ENCODE measurements at regions of chr19 and their contacts with region 1.

Region 1: DNA sequence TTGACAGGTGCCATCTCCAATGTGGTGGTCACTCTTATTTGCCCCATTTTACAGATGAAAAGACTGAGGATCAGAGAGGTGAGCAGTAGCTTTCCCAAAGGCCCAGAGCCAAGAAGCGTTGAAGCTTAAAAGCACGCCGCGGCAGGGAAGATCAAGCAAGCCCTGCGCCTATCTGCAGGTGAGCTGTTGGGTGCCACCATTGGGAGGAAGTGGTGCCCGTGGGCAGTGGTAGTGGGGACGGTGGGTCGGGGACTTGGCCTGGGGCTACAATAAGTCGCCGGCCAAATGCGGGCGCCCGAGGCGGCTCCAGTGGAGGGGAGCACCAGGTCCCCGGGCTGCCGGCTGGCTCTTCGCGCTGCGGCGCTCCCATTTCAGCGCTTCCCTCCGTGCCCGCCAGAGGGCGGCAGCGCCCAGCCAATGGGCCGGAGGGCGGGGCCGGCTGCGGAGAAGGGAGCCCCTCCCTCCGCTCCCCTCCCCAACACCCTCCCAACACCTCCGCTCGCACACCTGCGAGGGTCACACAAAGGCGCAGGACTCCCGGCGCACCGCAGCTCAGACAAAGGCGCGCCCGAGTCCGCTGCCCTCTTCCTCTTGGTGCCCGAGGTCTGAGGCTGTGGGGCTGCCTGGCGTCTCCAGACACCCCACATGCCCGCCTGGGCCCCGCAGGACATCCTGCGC is 744 bp upstream of the POU2F2 start:
- DNase-seq: peak; percentile 27 to 92
- H3K4me3 ChIP-seq: no peak overlapping the region
- CTCF ChIP-seq: no peak
- POLR2A ChIP-seq: no peak

Region 2: GRCh38 chr19:42172261-42172660 is 39.3 kb after region 1 on chr19:
- intact Hi-C with region 1: no loop called
- DNase-seq: no peak
- H3K4me3 ChIP-seq: no peak overlapping the region
- CTCF ChIP-seq: no peak
- POLR2A ChIP-seq: no peak

Region 3: DNA sequence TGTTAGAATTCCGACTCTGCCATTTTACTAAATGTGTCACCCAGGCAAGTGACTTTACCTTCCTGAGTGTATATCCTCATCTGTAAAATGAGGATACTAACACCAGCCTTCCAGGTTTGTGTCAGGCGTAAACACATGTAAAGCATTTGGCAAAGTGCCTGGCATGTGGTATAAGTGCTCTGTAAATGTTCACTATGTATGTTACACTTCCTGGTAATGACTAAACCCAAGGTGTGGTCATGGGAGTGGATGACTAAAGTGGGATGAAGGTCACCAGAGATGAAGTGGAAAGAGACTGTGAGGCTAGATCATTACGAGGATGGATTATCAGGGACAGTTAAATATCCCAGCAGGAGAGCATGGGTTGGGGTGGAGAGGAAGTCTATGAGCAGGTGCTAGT is 58.9 kb after region 1 on chr19:
- intact Hi-C with region 1: no loop called
- DNase-seq: peak in 1 of 2 donors; percentile 57
- H3K4me3 ChIP-seq: no peak overlapping the region
- CTCF ChIP-seq: no peak
- POLR2A ChIP-seq: no peak

Region 4: GRCh38 chr19:42229855-42230351 is 96.9 kb after region 1 on chr19:
- intact Hi-C with region 1: loop called (anchors 10 kb)
- DNase-seq: no peak
- H3K4me3 ChIP-seq: no peak overlapping the region
- CTCF ChIP-seq: no peak
- POLR2A ChIP-seq: no peak

Measured in lower leg skin (tissue), 4 donors.